Naive thymus-derived CD4-positive, alpha-beta T cell (primary cell): ENCODE measurements at regions of chr11 and their contacts with region 1.

Region 1: GRCh38 chr11:33736148-33736809 is at the start of gene CD59:
- DNase-seq: peak; percentile 75 to 94 (median 85)
- ATAC-seq: peak; percentile 92
- H3K4me3 ChIP-seq: peak within 1 kb of the TSS; percentile 76
- H3K4me3 Mint-ChIP-seq: peak within 1 kb of the TSS; percentile 87 to 97 (median 92)
- H3K27ac ChIP-seq: peak within 1 kb of the TSS; percentile 72
- H3K27ac Mint-ChIP-seq: peak within 1 kb of the TSS; percentile 79 to 94 (median 86)
- H3K4me1 ChIP-seq: peaks cover 9 to 17% of the 10 kb centered on the region in 2 donors
- H3K4me1 Mint-ChIP-seq: peaks cover 21 to 41% (median 36%) of the 10 kb centered on the region in 7 donors
- H3K27me3 ChIP-seq: no peaks in the 10 kb centered on the region
- H3K27me3 Mint-ChIP-seq: peaks cover 0 to 11% (median 0%) of the 10 kb centered on the region in 5 donors
- total RNA-seq, gene CD59: 23.3 to 152 (median 62.7) TPM

Region 2: DNA sequence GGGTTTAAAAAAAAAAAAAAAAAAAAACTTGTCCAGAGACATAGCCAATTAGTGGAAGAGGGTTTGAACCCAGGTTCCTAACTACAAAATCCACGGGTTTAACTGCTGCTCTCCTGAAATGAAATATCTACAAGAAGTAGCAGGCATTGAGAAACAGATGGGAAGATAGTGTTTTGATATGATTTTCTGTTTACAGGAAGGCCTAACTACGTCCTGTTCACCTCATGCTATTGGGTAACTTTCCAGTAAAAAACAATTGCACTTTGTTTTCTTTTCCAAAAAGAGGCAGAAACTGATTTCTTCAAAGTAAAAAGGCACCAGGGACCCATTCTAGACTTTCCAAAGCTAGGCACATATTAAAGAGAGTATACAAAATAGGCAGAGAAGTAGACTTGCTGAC is 29.7 kb before region 1 on chr11:
- CTCF ChIA-PET with region 1: no interaction called
- POLR2A ChIA-PET with region 1: interaction called, 9 read pairs
- intact Hi-C with region 1: loop called in 1 of 2 experiments (anchors 1 kb)
- DNase-seq: no peak
- ATAC-seq: no peak
- H3K4me3 ChIP-seq: no peak overlapping the region
- H3K4me3 Mint-ChIP-seq: no peak overlapping the region
- H3K27ac ChIP-seq: no peak overlapping the region
- H3K27ac Mint-ChIP-seq: peak overlapping the region in 6 of 9 donors; percentile 28 to 87 (median 36)
- H3K4me1 ChIP-seq: peaks cover 0 to under 1% of the 10 kb centered on the region in 2 donors
- H3K4me1 Mint-ChIP-seq: peaks cover 4 to 31% (median 10%) of the 10 kb centered on the region in 7 donors
- H3K27me3 ChIP-seq: no peaks in the 10 kb centered on the region
- H3K27me3 Mint-ChIP-seq: no peaks in the 10 kb centered on the region

Region 3: GRCh38 chr11:33716236-33716635 is 20.0 kb before region 1 on chr11:
- CTCF ChIA-PET with region 1: interaction called, 30 read pairs
- POLR2A ChIA-PET with region 1: interaction called, 4 read pairs
- intact Hi-C with region 1: loop called in 1 of 2 experiments (anchors 2 kb)
- DNase-seq: peak in 2 of 9 donors; percentile 10 to 23
- ATAC-seq: no peak
- H3K4me3 ChIP-seq: no peak overlapping the region
- H3K4me3 Mint-ChIP-seq: no peak overlapping the region
- H3K27ac ChIP-seq: no peak overlapping the region
- H3K27ac Mint-ChIP-seq: no peak overlapping the region
- H3K4me1 ChIP-seq: no peaks in the 10 kb centered on the region
- H3K4me1 Mint-ChIP-seq: peaks cover 0 to 7% (median 0%) of the 10 kb centered on the region in 7 donors
- H3K27me3 ChIP-seq: no peaks in the 10 kb centered on the region
- H3K27me3 Mint-ChIP-seq: no peaks in the 10 kb centered on the region

Region 4: GRCh38 chr11:33723238-33723887 is 12.9 kb before region 1 on chr11:
- CTCF ChIA-PET with region 1: no interaction called
- POLR2A ChIA-PET with region 1: interaction called, 4 read pairs
- intact Hi-C with region 1: loop called in 1 of 2 experiments (anchors 1 kb)
- DNase-seq: peak in 1 of 9 donors; percentile 26
- ATAC-seq: peak; percentile 29
- H3K4me3 ChIP-seq: no peak overlapping the region
- H3K4me3 Mint-ChIP-seq: peak overlapping the region in 1 of 10 donors; percentile 8
- H3K27ac ChIP-seq: no peak overlapping the region
- H3K27ac Mint-ChIP-seq: peak overlapping the region in 2 of 9 donors; percentile 42 to 64
- H3K4me1 ChIP-seq: no peaks in the 10 kb centered on the region
- H3K4me1 Mint-ChIP-seq: peaks cover 22 to 61% (median 32%) of the 10 kb centered on the region in 7 donors
- H3K27me3 ChIP-seq: no peaks in the 10 kb centered on the region
- H3K27me3 Mint-ChIP-seq: no peaks in the 10 kb centered on the region